ENCODE measurements at regions of chr17 and their contacts with region 1.

Region 1: GRCh38 chr17:18183334-18184142 is at the start of gene ALKBH5:
- DNase-seq: peak; percentile 98
- H3K4me3 ChIP-seq: peak within 1 kb of the TSS; percentile 89
- H3K27ac ChIP-seq: peak within 1 kb of the TSS; percentile 84
- H3K4me1 ChIP-seq: peaks cover 40% of the 10 kb centered on the region
- H3K27me3 ChIP-seq: no peaks in the 10 kb centered on the region
- CTCF ChIP-seq: peak; percentile 41
- total RNA-seq, gene ALKBH5: 101 and 117 TPM in 2 replicates

Region 2: DNA sequence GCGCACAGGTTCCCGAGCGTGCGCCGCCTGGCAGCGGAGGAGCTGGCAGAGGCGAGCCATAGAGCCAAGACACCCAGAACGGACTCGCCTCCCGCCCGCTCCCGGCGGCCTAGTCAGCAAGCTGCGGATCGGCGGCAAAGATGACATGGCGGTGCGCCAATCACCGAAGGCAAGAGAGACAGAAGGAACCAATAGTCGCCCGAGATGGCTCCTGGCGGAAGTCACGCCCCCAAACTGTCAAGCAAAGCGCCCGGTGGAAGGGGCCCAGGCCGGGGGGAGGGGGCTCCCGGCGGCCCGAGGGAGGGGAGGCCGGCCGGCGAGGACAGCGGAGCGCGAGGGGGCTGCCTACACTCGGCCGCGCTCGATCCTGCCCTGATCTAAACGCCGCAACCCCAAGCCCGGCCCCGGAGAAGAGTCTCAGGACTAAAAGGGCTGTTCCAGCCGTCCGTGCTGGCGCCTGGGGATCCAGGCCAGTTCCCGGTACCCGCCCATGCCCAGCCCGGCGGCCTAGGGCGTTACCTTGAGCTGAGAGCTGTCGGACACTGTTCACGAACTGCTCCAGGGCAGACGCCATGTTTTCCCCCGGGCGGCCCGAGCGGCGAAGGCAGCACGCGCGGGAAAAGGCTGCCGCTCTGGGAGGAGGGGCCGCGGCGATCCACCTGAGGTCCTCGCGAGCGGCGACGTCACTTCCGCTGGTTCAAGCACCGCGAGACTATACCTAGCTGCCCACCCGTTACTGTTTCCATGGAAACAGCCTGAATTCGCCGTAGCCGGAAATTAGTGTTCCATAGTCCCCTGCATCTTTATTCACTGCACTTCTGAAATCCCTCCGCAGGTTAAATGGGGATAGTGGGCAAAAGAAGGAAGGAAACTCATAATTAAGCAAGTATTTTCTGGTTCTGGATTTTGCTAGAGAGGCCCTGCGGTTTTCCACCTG is 902.7 kb before region 1 on chr17 and contains the start of gene COPS3:
- CTCF ChIA-PET with region 1: no interaction called
- POLR2A ChIA-PET with region 1: no interaction called
- intact Hi-C with region 1: loop called (anchors 5 kb)
- DNase-seq: peak; percentile 94 to 95
- H3K4me3 ChIP-seq: peak within 1 kb of the TSS; percentile 87
- H3K27ac ChIP-seq: peak within 1 kb of the TSS; percentile 58
- H3K4me1 ChIP-seq: peaks cover 12% of the 10 kb centered on the region
- H3K27me3 ChIP-seq: no peaks in the 10 kb centered on the region
- CTCF ChIP-seq: no peak
- total RNA-seq, gene COPS3: 57.7 and 87.6 TPM in 2 replicates

Region 3: DNA sequence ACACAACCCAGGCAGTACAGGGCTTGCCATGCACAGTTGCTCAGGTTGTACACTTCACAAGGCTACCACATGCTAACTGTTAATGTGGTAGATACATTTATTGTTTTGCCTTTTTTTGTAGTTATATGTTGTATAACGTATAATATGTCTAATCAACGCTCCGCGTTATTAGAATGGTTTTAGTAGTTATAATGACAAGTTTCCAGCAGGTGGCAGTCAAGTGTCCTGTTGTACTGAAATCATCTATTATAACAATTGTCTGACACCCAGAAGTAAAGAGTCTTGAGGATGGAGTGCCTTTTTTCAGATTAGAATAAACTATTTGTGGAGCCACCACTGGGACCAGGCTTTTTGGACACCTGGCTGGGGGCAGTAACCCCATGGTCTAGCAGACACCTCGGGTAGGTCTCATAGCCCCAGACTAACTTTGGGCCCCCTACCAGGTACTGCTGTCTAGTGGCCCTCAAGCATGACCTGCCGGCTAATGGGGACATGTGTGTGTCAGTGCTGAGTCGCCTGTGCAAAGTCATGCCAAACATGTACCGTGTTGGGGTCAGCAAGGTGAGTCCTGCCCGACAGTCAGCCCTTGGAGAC is 42.2 kb before region 1 on chr17:
- CTCF ChIA-PET with region 1: no interaction called
- POLR2A ChIA-PET with region 1: no interaction called
- intact Hi-C with region 1: loop called (anchors 2 kb)
- DNase-seq: peak in 1 of 2 experiments; percentile 30
- H3K4me3 ChIP-seq: no peak overlapping the region
- H3K27ac ChIP-seq: no peak overlapping the region
- H3K4me1 ChIP-seq: peaks cover 5% of the 10 kb centered on the region; the same call in 1 of the 2 replicates
- H3K27me3 ChIP-seq: no peaks in the 10 kb centered on the region
- CTCF ChIP-seq: peak; percentile 79

Region 4: DNA sequence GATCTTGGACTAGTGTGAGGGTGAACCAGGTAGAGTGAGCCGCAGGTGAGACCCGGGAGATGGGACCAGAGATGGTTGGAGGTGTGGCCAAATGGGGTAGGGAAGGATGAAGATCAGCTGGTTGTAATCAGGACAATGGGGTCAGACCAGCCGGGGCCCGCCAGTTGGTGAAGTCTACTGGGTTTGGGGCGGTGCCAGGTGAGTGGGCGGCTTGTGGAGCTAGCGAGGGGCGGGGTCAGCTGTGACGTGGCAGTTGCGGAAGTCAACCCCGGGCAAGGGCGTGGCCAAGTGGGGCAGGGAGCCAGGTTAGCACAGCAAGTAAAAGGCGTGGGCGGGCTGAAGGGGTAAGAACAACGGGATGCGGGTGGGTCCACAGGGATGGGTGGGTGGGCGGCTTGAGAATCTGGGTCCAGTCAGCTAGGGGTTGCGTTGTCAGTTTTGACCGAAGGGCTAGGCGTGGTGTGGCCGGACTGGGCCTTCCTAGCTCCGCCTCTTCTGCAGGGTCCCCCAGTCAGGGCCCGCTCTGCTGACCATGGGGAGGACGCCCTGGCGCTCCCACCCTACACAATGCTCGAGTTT is 25.4 kb before region 1 on chr17:
- CTCF ChIA-PET with region 1: interaction called, 5 read pairs
- POLR2A ChIA-PET with region 1: interaction called, 4 read pairs
- intact Hi-C with region 1: loop called (anchors 2 kb)
- DNase-seq: peak; percentile 69 to 96
- H3K4me3 ChIP-seq: peak overlapping the region; percentile 46; the same call in 1 of the 2 replicates
- H3K27ac ChIP-seq: no peak overlapping the region
- H3K4me1 ChIP-seq: 0 out of 2 replicates have a peak, but pooled peaks cover 5% of the 10 kb centered on the region
- H3K27me3 ChIP-seq: no peaks in the 10 kb centered on the region
- CTCF ChIP-seq: no peak

Region 5: DNA sequence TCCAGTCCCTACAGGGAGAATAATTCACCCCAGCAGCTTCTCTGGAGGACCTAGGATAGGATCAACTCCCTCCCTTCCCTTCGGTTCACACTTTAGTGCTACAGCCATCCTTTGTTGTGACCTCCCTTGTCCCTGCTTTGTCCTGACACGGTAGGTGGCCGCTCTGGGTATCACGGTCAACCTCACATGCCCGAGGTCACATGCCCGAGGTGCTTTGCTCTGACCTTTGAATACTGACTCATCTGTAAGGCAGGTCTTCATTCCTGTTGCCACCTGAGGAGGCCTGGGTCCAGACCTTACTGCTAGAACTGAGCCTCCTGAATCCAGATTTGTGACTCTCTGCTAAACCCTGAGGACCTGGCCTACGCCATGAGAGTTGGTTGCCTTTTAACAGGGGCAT is 19.8 kb after region 1 on chr17:
- CTCF ChIA-PET with region 1: no interaction called
- POLR2A ChIA-PET with region 1: no interaction called
- intact Hi-C with region 1: no loop called
- DNase-seq: peak; percentile 63 to 67
- H3K4me3 ChIP-seq: no peak overlapping the region
- H3K27ac ChIP-seq: 0 out of 2 replicates have a peak overlapping the region, but pooled peaks have one; percentile 43
- H3K4me1 ChIP-seq: peaks cover 16% of the 10 kb centered on the region
- H3K27me3 ChIP-seq: no peaks in the 10 kb centered on the region
- CTCF ChIP-seq: no peak

Region 6: DNA sequence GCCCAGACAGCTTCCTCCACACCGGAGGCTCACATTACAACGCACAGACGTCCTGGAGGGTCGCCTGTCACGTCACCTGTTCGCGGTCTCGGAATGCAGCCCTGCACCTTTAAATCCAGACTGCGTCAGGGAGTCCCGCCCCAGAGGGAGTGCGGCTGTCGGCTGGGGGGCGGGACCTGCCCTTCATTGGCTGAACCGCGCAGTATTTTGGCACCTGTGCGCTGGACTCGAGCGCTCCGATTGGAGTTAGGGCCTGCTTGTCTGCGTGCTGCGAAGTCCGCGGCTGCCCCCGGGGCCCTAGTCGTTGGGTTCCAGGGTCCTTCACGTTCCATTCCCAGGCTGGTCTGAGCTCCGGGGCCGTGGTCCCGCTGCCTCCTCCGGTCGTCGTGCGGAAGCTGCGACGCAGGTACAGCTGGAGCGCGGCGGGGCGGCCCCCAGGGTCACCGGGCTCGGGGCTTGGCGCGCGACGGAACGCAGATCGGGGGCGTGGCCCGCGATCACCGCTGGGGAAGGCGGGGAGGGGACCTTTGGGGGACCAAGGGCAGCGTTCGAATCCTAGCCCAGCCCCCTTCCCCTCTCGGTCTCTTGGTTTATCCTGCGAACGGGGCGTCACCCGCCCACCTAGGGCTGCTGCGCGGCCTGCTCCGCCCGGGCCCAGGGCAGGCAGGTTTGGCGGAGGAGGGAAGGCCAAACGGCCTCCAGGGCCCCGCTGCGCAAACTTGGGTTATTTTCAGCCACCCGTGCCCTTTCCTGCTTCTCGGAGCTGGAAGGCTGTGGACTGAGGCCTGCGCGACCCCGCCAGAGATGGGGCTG is 77.0 kb after region 1 on chr17 and contains the start of gene MIEF2:
- CTCF ChIA-PET with region 1: no interaction called
- POLR2A ChIA-PET with region 1: interaction called, 9 read pairs
- intact Hi-C with region 1: loop called (anchors 2 kb)
- DNase-seq: peak; percentile 93 to 98
- H3K4me3 ChIP-seq: peak within 1 kb of the TSS; percentile 84
- H3K27ac ChIP-seq: peak within 1 kb of the TSS; percentile 96
- H3K4me1 ChIP-seq: peaks cover 39% of the 10 kb centered on the region
- H3K27me3 ChIP-seq: no peaks in the 10 kb centered on the region
- CTCF ChIP-seq: no peak
- total RNA-seq, gene MIEF2: 29.6 and 33.0 TPM in 2 replicates

Region 7: DNA sequence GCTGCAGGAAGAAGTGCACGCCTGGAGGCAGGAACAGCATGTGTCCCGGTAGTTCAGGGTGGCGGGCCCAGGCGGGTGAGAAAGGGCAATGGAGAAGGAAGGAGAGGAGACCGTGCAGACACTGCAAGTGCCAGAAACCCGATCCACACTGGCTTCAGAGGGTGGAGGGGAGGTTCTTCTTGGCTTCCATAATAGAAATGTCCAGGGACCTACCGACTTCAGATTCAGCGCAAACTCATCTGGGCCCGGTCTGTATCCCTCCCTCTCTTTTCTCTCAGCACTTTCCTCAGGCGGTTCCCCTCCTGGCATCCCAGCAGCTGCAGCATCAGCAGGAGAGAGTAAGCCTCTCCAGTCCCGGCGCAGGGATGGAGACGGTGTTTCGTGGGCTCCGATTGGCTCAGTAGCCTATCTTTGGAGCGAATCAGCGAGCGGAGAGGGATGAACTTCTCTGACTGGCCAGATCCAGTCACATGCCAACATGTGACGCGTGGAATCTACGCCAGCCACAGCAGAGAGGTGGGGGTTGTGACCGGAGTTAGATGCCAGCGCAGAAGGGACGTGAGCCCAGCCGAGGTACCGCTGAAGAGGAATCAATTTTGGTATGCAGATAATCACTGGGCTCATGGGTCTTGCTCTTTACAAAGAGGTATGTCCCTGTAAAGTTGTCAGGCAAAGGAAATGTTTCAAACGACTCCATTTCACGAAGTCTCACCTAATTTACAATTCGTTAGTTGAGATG is 672.5 kb after region 1 on chr17:
- CTCF ChIA-PET with region 1: no interaction called
- POLR2A ChIA-PET with region 1: interaction called, 23 read pairs
- intact Hi-C with region 1: no loop called
- DNase-seq: peak; percentile 89 to 92
- H3K4me3 ChIP-seq: peak overlapping the region; percentile 59
- H3K27ac ChIP-seq: no peak overlapping the region
- H3K4me1 ChIP-seq: peaks cover 22% of the 10 kb centered on the region
- H3K27me3 ChIP-seq: no peaks in the 10 kb centered on the region
- CTCF ChIP-seq: no peak